Activated T-helper 1 cell treated with anti-CD3 and anti-CD28 coated beads, Interleukin-12 subunit alpha, Interleukin-12 subunit beta, Interleukin-2, Interleukin-4 antibody, amounts not matched to agents 30 ng/mL and 10 ng/mL and 1 ng/mL, durations not matched to agents 14 hours and 24 hours and 36 hours (primary cell): ENCODE measurements at regions of chr10 and their contacts with region 1.

Region 1: GRCh38 chr10:5434017-5434753 is 21.8 kb downstream of the NET1 start:
- DNase-seq: no peak
- H3K4me3 Mint-ChIP-seq: no peak overlapping the region
- H3K27ac Mint-ChIP-seq: peak overlapping the region; percentile 49
- H3K4me1 Mint-ChIP-seq: peaks cover 17% of the 10 kb centered on the region
- H3K27me3 Mint-ChIP-seq: no peaks in the 10 kb centered on the region

Region 2: GRCh38 chr10:4813023-4813422 is 621.2 kb before region 1 on chr10:
- intact Hi-C with region 1: loop called (anchors 1 kb)
- DNase-seq: no peak
- H3K4me3 Mint-ChIP-seq: no peak overlapping the region
- H3K27ac Mint-ChIP-seq: no peak overlapping the region
- H3K4me1 Mint-ChIP-seq: no peaks in the 10 kb centered on the region
- H3K27me3 Mint-ChIP-seq: peaks cover 10% of the 10 kb centered on the region

Region 3: GRCh38 chr10:5094265-5095205 is 339.6 kb before region 1 on chr10 and contains the start of gene AKR1C3:
- intact Hi-C with region 1: loop called (anchors 5 kb)
- DNase-seq: no peak
- H3K4me3 Mint-ChIP-seq: peak within 1 kb of the TSS; percentile 59
- H3K27ac Mint-ChIP-seq: no peak within 1 kb of the TSS
- H3K4me1 Mint-ChIP-seq: peaks cover 14% of the 10 kb centered on the region
- H3K27me3 Mint-ChIP-seq: peaks cover 2% of the 10 kb centered on the region
- total RNA-seq, gene AKR1C3: 0.26 TPM in 1 of 2 replicates, not detected in the other

Region 4: DNA sequence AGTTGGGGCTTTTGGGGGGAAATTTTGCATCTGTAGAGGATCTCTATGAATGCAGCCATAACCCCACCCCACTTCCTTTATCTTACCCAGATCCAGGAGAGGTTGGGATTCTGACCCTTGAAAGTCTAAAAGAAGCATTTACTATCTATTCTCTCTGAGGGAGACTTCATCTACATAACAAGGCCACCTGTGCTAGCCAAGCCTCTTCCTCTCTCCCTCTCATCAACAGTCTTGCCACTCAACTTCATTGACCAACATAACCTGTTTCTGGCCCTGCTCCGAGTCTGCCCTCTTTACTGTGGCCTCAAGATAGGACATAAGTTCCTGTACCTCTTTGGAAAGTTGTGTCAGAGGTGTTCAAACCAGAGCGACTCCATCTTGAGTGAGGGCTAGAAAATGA is 49.0 kb before region 1 on chr10:
- intact Hi-C with region 1: no loop called
- DNase-seq: no peak
- H3K4me3 Mint-ChIP-seq: no peak overlapping the region
- H3K27ac Mint-ChIP-seq: no peak overlapping the region
- H3K4me1 Mint-ChIP-seq: no peaks in the 10 kb centered on the region
- H3K27me3 Mint-ChIP-seq: peaks cover 4% of the 10 kb centered on the region

Region 5: GRCh38 chr10:5412277-5412941 is 21.8 kb before region 1 on chr10 and contains the start of gene NET1:
- intact Hi-C with region 1: loop called (anchors 2 kb)
- DNase-seq: peak; percentile 70
- H3K4me3 Mint-ChIP-seq: peak within 1 kb of the TSS; percentile 86
- H3K27ac Mint-ChIP-seq: peak within 1 kb of the TSS; percentile 59
- H3K4me1 Mint-ChIP-seq: peaks cover 5% of the 10 kb centered on the region
- H3K27me3 Mint-ChIP-seq: peaks cover 18% of the 10 kb centered on the region
- total RNA-seq, gene NET1: 37.2 and 40.3 TPM in 2 replicates